ENCODE measurements at regions of chrX and their contacts with region 1.

Region 1: DNA sequence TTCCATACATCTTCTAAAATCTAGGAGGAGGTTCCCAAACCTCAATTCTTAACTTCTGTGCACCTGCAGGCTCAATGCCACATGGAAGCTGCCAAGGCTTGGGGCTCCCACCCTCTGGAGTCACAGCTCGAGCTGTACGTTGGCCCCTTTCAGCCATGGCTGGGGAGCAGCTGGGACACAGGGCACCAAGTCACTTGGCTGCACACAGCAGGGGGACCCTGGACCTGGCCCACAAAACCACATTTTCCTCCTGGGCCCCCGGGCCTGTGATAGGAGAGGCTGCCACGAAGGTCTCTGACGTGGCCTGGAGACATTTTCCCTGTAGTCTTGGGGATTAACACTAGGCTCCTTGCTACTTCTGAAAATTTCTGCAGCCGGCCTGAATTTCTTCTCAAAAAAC is 8.2 kb upstream of the TENT5D start:
- DNase-seq: no peak
- ATAC-seq: no peak
- H3K4me3 Mint-ChIP-seq: no peak overlapping the region
- H3K27ac Mint-ChIP-seq: no peak overlapping the region
- H3K4me1 Mint-ChIP-seq: no peaks in the 10 kb centered on the region
- H3K27me3 Mint-ChIP-seq: no peaks in the 10 kb centered on the region

Region 2: GRCh38 chrX:80290834-80291233 is 121.2 kb before region 1 on chrX:
- CTCF ChIA-PET with region 1: no interaction called
- POLR2A ChIA-PET with region 1: no interaction called
- intact Hi-C with region 1: no loop called
- DNase-seq: no peak
- ATAC-seq: no peak
- H3K4me3 Mint-ChIP-seq: no peak overlapping the region
- H3K27ac Mint-ChIP-seq: no peak overlapping the region
- H3K4me1 Mint-ChIP-seq: no peaks in the 10 kb centered on the region
- H3K27me3 Mint-ChIP-seq: no peaks in the 10 kb centered on the region

Region 3: GRCh38 chrX:81405781-81406180 is 993.7 kb after region 1 on chrX:
- CTCF ChIA-PET with region 1: no interaction called
- POLR2A ChIA-PET with region 1: no interaction called
- intact Hi-C with region 1: loop called in 1 of 2 experiments (anchors 10 kb)
- DNase-seq: no peak
- ATAC-seq: no peak
- H3K4me3 Mint-ChIP-seq: no peak overlapping the region
- H3K27ac Mint-ChIP-seq: no peak overlapping the region
- H3K4me1 Mint-ChIP-seq: no peaks in the 10 kb centered on the region
- H3K27me3 Mint-ChIP-seq: no peaks in the 10 kb centered on the region

Measured in activated CD4-positive, alpha-beta T cell treated with anti-CD3 and anti-CD28 coated beads for 36 hours (primary cell).